ENCODE measurements at regions of chr20 and their contacts with region 1.

Region 1: DNA sequence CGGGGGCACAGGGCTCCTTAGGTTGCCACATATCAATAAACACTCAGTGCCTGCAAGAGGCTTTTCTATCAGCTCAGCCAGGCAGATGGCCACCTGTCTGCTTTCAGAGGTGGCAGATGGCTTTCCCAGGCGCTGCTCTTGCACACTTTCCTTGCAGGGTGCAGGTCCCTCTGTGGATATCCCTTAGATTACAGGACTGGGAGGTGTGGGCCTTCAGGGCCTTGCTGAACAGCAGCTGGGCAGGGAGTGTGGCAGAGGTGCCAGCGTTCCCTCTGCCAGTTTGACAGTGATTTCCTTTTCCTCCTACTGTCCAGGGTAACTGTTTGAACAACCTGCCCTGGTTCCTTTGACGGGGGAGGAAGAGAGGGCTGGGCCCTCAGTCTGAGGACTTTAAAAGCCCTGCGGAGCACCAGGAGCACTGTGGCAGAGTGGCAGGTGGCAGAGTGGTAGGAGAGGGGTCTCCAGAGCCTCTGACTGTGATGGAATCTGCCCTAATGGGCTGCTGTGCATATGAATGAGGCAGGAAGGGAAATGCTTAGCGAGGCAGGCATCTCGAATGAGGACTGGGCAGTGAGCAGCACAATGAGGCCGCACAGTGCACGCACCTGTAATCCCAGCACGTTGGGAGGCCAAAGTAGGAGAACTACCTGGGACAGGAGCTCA is 34.2 kb downstream of the ABHD12 start:
- DNase-seq: peak in 2 of 10 donors; percentile 38 to 80
- H3K4me3 ChIP-seq: peak overlapping the region in 4 of 59 donors; percentile 7 to 21 (median 12)
- H3K27ac ChIP-seq: peak overlapping the region; percentile 5 to 94 (median 85)
- H3K27me3 ChIP-seq: no peaks in the 10 kb centered on the region
- CTCF ChIP-seq: no peak

Region 2: DNA sequence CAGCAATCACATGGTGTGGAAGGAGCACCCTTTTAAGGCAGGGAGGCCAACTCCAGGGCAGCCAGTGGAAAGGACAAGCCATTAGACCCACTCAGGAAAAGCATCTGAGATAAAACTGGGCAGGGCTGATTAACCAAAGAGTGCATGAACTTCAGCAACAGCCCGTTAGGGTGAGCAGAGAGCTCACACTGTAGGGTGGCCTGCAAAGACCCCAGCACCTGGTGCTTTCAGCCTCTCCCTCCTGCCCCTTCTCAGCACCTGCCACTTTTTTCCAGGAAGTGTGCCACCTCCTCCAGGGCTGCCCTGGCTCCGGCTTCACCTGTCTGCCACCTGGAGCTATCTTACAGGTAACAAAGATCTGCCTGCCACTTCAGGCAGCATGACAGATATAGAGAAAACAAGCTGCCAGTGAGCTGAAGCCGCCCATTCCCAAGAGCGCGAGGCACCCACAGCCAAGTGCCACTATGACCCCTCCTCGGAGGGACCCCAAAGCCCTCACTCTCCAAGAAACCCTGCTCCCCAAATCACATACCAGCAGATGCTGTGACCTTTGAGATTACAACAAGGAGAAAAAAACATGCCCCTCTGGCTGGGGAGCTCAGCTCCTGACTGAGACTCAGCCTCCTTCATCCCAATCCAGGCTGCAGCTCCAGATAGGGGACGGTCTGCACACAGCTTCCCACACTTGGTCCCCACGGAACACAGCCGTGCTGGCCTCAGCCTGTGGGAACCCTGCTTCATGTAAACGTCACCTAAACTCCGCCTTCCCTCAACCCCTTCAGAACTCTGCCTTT is 37.0 kb before region 1 on chr20:
- intact Hi-C with region 1: loop called in 1 of 2 experiments (anchors 5 kb)
- DNase-seq: peak in 2 of 10 donors; percentile 33 to 38
- H3K4me3 ChIP-seq: peak overlapping the region in 46 of 59 donors; percentile 1 to 59 (median 31)
- H3K27ac ChIP-seq: peak overlapping the region in 57 of 59 donors; percentile 23 to 92 (median 85)
- H3K27me3 ChIP-seq: no peaks in the 10 kb centered on the region
- CTCF ChIP-seq: no peak

Region 3: GRCh38 chr20:25390538-25391528 is 34.4 kb after region 1 on chr20 and contains the start of gene ABHD12:
- intact Hi-C with region 1: loop called (anchors 5 kb)
- DNase-seq: peak; percentile 94 to 97 (median 95)
- H3K4me3 ChIP-seq: peak within 1 kb of the TSS; percentile 66 to 99 (median 89)
- H3K27ac ChIP-seq: peak within 1 kb of the TSS; percentile 53 to 96 (median 92)
- H3K27me3 ChIP-seq: no peaks in the 10 kb centered on the region
- CTCF ChIP-seq: peak in 41 of 56 donors; percentile 9 to 60 (median 32)
- total RNA-seq, gene ABHD12: 79.8 to 142 (median 109) TPM